ENCODE measurements at regions of chr17 and their contacts with region 1.

Region 1: DNA sequence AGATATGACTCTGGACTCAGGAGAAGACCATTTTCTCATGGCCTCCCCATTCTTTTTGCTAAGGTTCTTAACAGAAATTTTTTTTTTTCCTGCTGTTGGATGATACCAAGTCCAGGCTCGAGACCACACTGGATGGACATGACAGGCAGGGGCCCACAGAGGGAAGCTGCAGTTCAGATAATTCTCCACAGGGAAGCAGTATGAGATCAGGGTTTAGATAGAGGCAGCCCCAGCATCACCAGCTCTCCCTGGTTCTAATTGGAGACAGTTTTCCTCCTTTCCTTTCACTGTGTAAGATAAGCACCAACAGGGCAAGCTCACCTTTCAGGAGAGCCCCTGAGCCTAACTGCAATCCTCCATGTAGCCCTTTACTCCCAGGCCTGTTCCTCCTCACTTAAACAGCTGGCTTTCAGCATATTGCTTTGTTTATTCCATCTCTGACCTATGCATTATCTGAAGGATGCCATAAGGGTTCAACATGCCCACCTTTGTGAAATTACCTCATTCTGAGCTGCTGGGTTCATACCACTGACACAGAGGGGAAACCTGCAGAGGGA is 108.1 kb downstream of the SNX11 start:
- DNase-seq: peak; percentile 78
- H3K4me3 Mint-ChIP-seq: no peak overlapping the region
- H3K27ac Mint-ChIP-seq: no peak overlapping the region
- H3K4me1 Mint-ChIP-seq: peaks cover 31% of the 10 kb centered on the region
- H3K27me3 Mint-ChIP-seq: no peaks in the 10 kb centered on the region
- CTCF ChIP-seq: peak; percentile 87

Region 2: GRCh38 chr17:47967607-47968243 is 247.9 kb before region 1 on chr17:
- CTCF ChIA-PET with region 1: no interaction called
- intact Hi-C with region 1: no loop called
- DNase-seq: no peak
- H3K4me3 Mint-ChIP-seq: no peak overlapping the region
- H3K27ac Mint-ChIP-seq: no peak overlapping the region
- H3K4me1 Mint-ChIP-seq: peaks cover 36% of the 10 kb centered on the region
- H3K27me3 Mint-ChIP-seq: no peaks in the 10 kb centered on the region
- CTCF ChIP-seq: no peak

Region 3: GRCh38 chr17:48228721-48229120 is 13.1 kb after region 1 on chr17:
- CTCF ChIA-PET with region 1: interaction called, 20 read pairs
- intact Hi-C with region 1: no loop called
- DNase-seq: no peak
- H3K4me3 Mint-ChIP-seq: no peak overlapping the region
- H3K27ac Mint-ChIP-seq: no peak overlapping the region
- H3K4me1 Mint-ChIP-seq: peaks cover 24% of the 10 kb centered on the region
- H3K27me3 Mint-ChIP-seq: no peaks in the 10 kb centered on the region
- CTCF ChIP-seq: no peak

Region 4: GRCh38 chr17:48244121-48244711 is 28.6 kb after region 1 on chr17:
- CTCF ChIA-PET with region 1: interaction called, 15 read pairs
- intact Hi-C with region 1: loop called (anchors 1 kb)
- DNase-seq: peak; percentile 61
- H3K4me3 Mint-ChIP-seq: peak overlapping the region; percentile 31
- H3K27ac Mint-ChIP-seq: peak overlapping the region; percentile 72
- H3K4me1 Mint-ChIP-seq: peaks cover 90% of the 10 kb centered on the region
- H3K27me3 Mint-ChIP-seq: no peaks in the 10 kb centered on the region
- CTCF ChIP-seq: no peak

Region 5: GRCh38 chr17:48307814-48308411 is 92.3 kb after region 1 on chr17:
- CTCF ChIA-PET with region 1: interaction called, 12 read pairs
- intact Hi-C with region 1: no loop called
- DNase-seq: peak; percentile 79
- H3K4me3 Mint-ChIP-seq: no peak overlapping the region
- H3K27ac Mint-ChIP-seq: no peak overlapping the region
- H3K4me1 Mint-ChIP-seq: peaks cover 30% of the 10 kb centered on the region
- H3K27me3 Mint-ChIP-seq: no peaks in the 10 kb centered on the region
- CTCF ChIP-seq: peak; percentile 95

Region 6: DNA sequence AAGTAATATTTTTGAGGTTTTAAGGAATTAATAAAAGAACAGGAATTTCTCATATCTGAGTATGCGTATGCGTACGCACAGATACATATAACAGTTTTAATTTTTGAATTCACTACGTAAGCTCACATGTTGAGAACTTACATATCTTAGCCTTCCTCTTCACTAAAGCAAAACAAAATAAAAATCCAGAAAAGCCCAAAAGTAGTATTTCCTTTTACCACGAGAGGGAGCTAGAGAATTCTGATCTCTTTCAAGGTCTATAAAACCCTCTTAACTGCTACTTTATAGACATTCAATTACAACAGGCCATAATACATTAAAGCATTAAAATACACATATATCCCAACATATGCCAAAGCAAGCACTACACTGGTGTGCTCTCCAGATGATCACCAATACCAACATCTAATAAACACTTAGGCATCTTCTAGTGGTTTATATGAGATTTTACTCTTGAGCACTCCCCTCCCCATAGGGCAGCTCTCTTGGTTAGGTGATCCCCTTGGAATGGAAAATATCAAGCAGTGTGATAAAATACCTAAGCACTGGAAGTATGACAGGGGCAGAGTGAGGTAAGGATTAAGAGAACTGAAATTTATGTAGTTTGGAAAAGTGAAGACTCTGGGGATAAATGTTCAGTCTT is 120.3 kb after region 1 on chr17:
- CTCF ChIA-PET with region 1: interaction called, 18 read pairs
- intact Hi-C with region 1: loop called (anchors 5 kb)
- DNase-seq: peak; percentile 20
- H3K4me3 Mint-ChIP-seq: no peak overlapping the region
- H3K27ac Mint-ChIP-seq: no peak overlapping the region
- H3K4me1 Mint-ChIP-seq: no peaks in the 10 kb centered on the region
- H3K27me3 Mint-ChIP-seq: no peaks in the 10 kb centered on the region
- CTCF ChIP-seq: peak; percentile 50

Region 7: GRCh38 chr17:48374650-48375230 is 159.1 kb after region 1 on chr17:
- CTCF ChIA-PET with region 1: interaction called, 6 read pairs
- intact Hi-C with region 1: loop called (anchors 2 kb)
- DNase-seq: peak; percentile 80
- H3K4me3 Mint-ChIP-seq: no peak overlapping the region
- H3K27ac Mint-ChIP-seq: no peak overlapping the region
- H3K4me1 Mint-ChIP-seq: no peaks in the 10 kb centered on the region
- H3K27me3 Mint-ChIP-seq: no peaks in the 10 kb centered on the region
- CTCF ChIP-seq: peak; percentile 91

Region 8: GRCh38 chr17:48618256-48618897 is 402.7 kb after region 1 on chr17:
- CTCF ChIA-PET with region 1: interaction called, 5 read pairs
- intact Hi-C with region 1: loop called (anchors 2 kb)
- DNase-seq: peak; percentile 98
- H3K4me3 Mint-ChIP-seq: peak overlapping the region; percentile 88
- H3K27ac Mint-ChIP-seq: peak overlapping the region; percentile 74
- H3K4me1 Mint-ChIP-seq: peaks cover 71% of the 10 kb centered on the region
- H3K27me3 Mint-ChIP-seq: peaks cover 88% of the 10 kb centered on the region
- CTCF ChIP-seq: peak; percentile 100